Caco-2 (cell line): ENCODE measurements at regions of chr17 and their contacts with region 1.

Region 1: DNA sequence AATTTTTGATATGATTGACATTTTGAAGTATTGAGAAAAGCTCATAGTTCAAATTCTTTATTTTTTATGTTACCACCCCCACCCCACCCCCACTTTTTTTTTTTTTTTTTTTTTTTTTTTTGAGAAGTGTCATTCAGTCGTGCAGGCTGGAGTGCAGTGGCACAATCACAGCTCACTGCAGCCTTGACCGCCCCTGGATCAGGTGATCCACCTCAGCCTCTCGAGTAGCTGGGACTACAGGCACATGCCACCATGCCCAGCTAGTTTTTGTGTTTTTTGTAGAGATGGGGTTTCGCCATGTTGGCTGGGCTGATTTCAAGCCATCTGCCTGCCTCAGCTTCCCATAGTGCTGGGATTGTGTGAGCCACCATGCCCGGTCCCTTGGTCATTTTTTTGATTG is 7.4 kb downstream of the TAF15 start:
- DNase-seq: no peak
- H3K4me3 ChIP-seq: no peak overlapping the region
- H3K4me3 Mint-ChIP-seq: no peak overlapping the region
- H3K27ac Mint-ChIP-seq: no peak overlapping the region
- H3K4me1 ChIP-seq: no peaks in the 10 kb centered on the region
- H3K4me1 Mint-ChIP-seq: no peaks in the 10 kb centered on the region
- H3K27me3 ChIP-seq: no peaks in the 10 kb centered on the region
- H3K27me3 Mint-ChIP-seq: no peaks in the 10 kb centered on the region
- CTCF ChIP-seq: no peak

Region 2: DNA sequence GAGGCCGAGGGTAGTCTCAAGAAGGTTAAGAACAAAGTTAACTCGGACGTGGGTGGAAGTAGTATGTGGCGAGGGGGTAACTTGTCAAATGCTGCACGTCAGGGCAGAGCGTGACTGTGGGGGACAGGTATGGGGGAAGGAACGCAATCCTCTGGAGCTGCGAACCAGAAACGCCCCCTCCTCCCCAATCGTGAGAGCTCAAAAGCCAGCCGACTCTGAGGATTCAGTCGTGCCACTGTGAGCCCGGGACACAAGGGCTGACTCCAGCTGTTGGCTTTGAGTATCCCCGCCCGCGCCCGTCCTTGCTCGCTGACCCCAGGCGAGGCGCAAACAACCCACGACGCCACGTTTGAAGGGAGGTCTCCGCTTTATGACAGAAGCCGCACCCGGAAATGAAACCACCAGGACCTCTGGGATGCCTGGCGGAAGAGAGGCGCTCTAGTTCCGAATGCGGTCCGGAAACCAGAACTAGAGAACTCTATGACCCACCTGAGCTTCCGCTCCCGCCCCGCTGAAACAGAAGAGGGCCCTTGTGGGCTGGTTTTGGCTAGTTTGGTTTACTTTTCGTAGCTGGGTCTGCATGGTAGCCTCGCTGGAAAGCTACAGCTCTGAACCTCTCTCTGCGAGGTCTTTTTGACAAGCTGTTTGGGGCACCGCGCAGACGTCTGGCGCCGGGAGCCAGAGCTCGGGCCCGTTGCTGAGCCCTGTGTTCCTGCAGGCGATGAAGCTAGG is 238.4 kb before region 1 on chr17 and contains the start of gene PEX12:
- CTCF ChIA-PET with region 1: no interaction called
- POLR2A ChIA-PET with region 1: interaction called, 17 read pairs
- intact Hi-C with region 1: no loop called
- DNase-seq: peak; percentile 88 to 92
- H3K4me3 ChIP-seq: peak within 1 kb of the TSS; percentile 50
- H3K4me3 Mint-ChIP-seq: peak within 1 kb of the TSS; percentile 100
- H3K27ac Mint-ChIP-seq: peak within 1 kb of the TSS; percentile 100
- H3K4me1 ChIP-seq: peaks cover 6% of the 10 kb centered on the region
- H3K4me1 Mint-ChIP-seq: peaks cover 5% of the 10 kb centered on the region
- H3K27me3 ChIP-seq: no peaks in the 10 kb centered on the region
- H3K27me3 Mint-ChIP-seq: no peaks in the 10 kb centered on the region
- CTCF ChIP-seq: no peak
- total RNA-seq, gene PEX12: 4.8 and 5.1 TPM in 2 replicates